Mammary epithelial cell (primary cell): ENCODE measurements at regions of chr2 and their contacts with region 1.

Region 1: DNA sequence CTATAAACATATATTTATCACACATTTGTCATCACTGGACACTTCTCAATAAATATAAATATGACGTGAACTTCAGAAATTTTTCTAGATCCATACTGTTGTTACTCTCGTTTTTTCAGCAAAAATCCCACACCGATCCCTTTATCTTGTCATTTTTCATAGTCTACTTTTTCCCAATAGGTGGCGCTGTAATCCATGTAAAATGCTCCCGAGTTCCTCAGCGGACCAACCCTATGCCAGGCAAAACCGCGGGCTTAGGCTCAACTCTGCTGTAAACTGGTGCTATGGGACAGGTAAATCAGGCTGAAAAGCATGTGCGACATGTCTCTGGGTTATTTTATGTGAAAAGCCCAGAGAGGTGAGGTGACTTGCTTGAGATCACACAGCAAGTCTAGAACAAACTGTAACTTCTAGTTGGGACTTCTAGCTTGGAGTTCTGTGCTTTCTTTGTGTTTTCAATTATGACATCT is 104.0 kb downstream of the COBLL1 start:
- DNase-seq: peak; percentile 65
- H3K4me3 ChIP-seq: no peak overlapping the region
- H3K27ac ChIP-seq: peak overlapping the region; percentile 24
- H3K4me1 ChIP-seq: peaks cover 34% of the 10 kb centered on the region
- H3K27me3 ChIP-seq: no peaks in the 10 kb centered on the region
- CTCF ChIP-seq: peak; percentile 68 to 69

Region 2: DNA sequence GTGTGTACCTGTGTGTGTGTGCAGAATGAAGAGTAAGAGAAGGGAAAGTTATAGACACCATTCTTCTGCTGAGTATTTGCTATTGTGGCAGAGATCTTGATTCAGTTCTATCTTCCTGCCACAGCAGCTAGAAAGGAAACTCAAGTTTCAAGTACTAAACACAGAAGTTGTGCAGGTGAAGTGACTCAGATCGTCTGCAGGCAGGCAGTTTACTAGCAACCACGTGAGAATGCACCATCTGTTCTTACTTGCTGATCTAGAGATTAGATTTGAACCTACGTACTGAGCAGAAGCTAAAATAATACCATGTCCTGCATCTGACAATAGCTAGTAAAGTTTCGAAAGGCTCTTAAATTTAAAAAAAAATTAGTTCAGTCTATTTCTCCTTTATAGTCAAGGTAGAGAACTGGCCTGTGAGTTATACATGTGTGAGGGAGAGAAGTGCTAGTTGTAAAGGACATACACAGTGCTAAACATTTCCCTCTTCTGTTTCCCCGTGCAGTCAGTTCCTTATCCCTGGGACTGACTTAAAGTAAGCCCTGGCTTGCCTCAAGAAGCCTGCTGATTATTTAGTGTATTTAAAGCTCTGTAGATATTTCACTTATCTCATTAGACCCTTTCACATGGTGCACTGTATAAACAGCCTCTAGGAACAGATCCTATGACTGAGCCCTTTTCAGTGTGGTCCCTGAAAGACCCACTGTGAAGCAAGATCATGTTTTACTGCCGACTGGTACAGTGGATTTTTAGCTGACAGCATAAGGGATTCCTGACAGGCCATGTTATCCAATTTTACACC is 172.7 kb after region 1 on chr2:
- CTCF ChIA-PET with region 1: interaction called, 4 read pairs
- dilution Hi-C with region 1: no loop called
- in situ Hi-C with region 1: loop called in 1 of 2 experiments (anchors 5 kb)
- intact Hi-C with region 1: loop called (anchors 1 kb)
- DNase-seq: peak; percentile 84
- H3K4me3 ChIP-seq: no peak overlapping the region
- H3K27ac ChIP-seq: no peak overlapping the region
- H3K4me1 ChIP-seq: peaks cover 22% of the 10 kb centered on the region
- H3K27me3 ChIP-seq: no peaks in the 10 kb centered on the region
- CTCF ChIP-seq: no peak

Region 3: GRCh38 chr2:164917296-164917903 is 179.8 kb after region 1 on chr2:
- CTCF ChIA-PET with region 1: interaction called, 4 read pairs
- dilution Hi-C with region 1: no loop called
- in situ Hi-C with region 1: loop called (anchors 5 to 10 kb)
- intact Hi-C with region 1: loop called (anchors 1 kb)
- DNase-seq: peak; percentile 49
- H3K4me3 ChIP-seq: no peak overlapping the region
- H3K27ac ChIP-seq: no peak overlapping the region
- H3K4me1 ChIP-seq: peaks cover 22% of the 10 kb centered on the region
- H3K27me3 ChIP-seq: no peaks in the 10 kb centered on the region
- CTCF ChIP-seq: peak; percentile 44 to 79